CD4-positive, alpha-beta memory T cell (primary cell): ENCODE measurements at regions of chr17 and their contacts with region 1.

Region 1: DNA sequence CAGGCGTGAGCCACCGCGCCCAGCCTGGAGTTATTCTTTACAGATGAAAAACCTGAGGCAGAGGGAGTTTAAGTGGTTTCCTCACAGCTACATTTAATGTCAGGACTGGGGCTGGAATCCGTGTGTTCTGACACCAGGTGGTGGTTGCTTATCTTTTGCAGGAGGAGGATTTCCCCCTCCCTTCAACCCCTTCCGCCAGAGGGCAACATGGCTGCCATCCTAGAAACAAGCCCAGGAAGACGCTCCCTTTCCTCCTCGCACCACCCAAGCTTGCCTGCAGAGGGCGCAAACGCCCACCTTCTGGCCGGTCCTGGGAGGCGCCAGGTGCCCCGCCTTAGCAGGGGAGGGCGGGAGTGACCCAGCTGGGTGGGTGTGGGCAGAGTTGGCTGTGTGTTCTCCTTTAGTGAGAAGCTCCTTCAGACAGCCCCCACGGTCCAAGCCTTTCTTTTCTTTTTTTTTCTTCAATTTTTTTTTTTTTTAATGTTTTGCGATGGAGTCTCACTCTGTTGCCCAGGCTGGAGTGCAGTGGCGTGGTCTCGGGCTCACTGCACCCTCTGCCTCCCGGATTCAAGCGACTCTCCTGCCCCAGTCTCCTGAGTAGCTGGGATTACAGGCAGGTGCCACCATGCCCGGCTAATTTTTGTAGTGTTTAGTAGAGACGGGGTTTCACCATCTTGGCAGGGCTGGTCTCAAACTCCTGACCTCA is 9.9 kb upstream of the RAP1GAP2 start:
- DNase-seq: peak; percentile 87 to 94 (median 90)
- H3K4me3 ChIP-seq: no peak overlapping the region
- H3K4me3 Mint-ChIP-seq: peak overlapping the region in 6 of 8 donors; percentile 3 to 39 (median 30)
- H3K27ac ChIP-seq: no peak overlapping the region
- H3K27ac Mint-ChIP-seq: peak overlapping the region in 1 of 7 donors; percentile 35
- H3K4me1 ChIP-seq: peaks cover 23% of the 10 kb centered on the region
- H3K4me1 Mint-ChIP-seq: peaks cover 8 to 31% (median 14%) of the 10 kb centered on the region in 4 donors
- H3K27me3 ChIP-seq: no peaks in the 10 kb centered on the region
- H3K27me3 Mint-ChIP-seq: peaks cover 0 to 1% of the 10 kb centered on the region in 2 donors

Region 2: DNA sequence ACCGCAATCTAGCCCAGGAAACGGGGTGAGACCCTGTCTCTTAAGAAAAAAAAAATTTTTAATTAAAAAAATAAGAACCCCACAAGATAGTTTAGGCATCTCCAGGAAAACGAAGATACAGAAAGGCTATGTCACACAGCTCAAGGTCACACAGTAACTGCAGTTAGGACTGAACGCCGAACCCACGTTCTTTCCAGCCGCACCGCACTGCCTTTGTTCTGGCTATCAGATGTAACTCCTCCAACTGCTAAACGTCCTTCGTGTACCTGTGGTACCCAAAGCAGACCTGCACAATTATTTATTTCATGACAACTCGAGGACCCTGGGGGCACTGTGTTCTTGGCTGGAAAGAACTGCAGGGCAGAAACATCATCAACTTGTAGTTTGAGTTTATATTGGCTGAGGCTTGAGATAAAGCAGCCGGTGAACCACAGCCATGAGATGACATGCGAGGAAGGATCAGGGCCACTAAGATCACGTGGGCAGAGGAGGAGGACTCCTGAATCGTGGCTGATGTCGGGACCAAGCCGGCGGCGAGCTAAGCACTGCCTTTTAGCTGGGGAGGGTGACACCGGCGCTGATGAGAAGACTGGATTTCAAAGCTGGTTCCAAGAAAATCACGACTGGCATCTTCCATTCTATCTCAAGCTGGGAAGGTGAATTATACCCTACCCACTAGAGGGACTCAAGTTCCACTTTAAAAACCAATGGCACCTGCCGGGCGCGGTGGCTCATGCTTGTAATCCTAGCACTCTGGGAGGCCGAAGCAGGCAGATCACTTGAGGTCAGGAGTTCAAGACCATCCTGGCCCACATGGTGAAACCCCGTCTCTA is 364.8 kb before region 1 on chr17:
- CTCF ChIA-PET with region 1: no interaction called
- POLR2A ChIA-PET with region 1: no interaction called
- intact Hi-C with region 1: no loop called
- DNase-seq: no peak
- H3K4me3 ChIP-seq: no peak overlapping the region
- H3K4me3 Mint-ChIP-seq: no peak overlapping the region
- H3K27ac ChIP-seq: no peak overlapping the region
- H3K27ac Mint-ChIP-seq: peak overlapping the region in 1 of 7 donors; percentile 9
- H3K4me1 ChIP-seq: no peaks in the 10 kb centered on the region
- H3K4me1 Mint-ChIP-seq: peaks cover 0 to 3% (median 0%) of the 10 kb centered on the region in 4 donors
- H3K27me3 ChIP-seq: no peaks in the 10 kb centered on the region
- H3K27me3 Mint-ChIP-seq: no peaks in the 10 kb centered on the region

Region 3: DNA sequence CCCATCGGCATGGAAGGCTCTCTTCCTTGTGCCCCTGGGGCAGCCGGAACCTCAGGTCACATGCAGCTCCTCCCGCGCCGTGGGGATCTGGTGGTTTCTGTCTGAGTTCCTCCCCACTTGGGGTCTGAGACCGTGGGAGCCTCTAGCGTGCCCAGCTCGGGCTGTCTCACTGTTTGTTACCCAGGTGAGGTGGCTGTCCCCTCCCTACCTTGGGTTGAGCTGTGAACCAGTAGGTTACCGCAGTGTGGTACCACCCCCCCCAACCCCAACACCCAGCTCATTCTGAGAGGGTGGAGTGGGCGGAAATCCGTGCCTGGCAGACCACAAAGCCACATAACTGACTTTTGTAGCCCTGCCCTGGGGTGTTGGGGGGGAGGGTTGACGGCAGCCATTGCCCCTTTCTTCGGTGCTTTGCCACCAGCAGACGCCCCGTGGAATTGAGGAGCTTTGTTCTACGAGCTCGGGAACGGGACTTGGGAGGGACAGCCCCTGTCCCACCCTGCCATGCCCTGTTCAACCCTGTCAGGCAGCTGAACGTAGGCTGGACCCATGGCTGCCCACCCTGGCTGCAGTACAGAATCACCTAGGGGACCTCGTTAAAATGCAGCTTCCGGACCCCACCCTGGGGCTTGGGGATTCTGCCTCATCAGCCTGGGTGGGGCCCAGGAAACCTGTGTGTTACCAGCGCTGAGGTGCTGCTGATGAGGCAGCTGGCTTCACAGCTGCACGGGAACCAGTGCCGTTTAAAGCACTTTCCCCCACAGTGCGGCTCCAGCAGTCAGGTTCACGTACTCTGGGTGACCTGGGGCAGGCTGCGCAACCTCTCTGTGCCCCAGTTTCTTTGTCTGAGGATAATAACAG is 28.4 kb after region 1 on chr17:
- CTCF ChIA-PET with region 1: interaction called, 46 read pairs
- POLR2A ChIA-PET with region 1: interaction called, 330 read pairs
- intact Hi-C with region 1: loop called (anchors 1 kb)
- DNase-seq: peak; percentile 98 to 100 (median 98)
- H3K4me3 ChIP-seq: peak overlapping the region; percentile 62 to 74
- H3K4me3 Mint-ChIP-seq: peak overlapping the region; percentile 79 to 87 (median 83)
- H3K27ac ChIP-seq: peak overlapping the region; percentile 57
- H3K27ac Mint-ChIP-seq: peak overlapping the region; percentile 93 to 97 (median 96)
- H3K4me1 ChIP-seq: peaks cover 53% of the 10 kb centered on the region
- H3K4me1 Mint-ChIP-seq: peaks cover 22 to 48% (median 31%) of the 10 kb centered on the region in 4 donors
- H3K27me3 ChIP-seq: no peaks in the 10 kb centered on the region
- H3K27me3 Mint-ChIP-seq: no peaks in the 10 kb centered on the region

Region 4: DNA sequence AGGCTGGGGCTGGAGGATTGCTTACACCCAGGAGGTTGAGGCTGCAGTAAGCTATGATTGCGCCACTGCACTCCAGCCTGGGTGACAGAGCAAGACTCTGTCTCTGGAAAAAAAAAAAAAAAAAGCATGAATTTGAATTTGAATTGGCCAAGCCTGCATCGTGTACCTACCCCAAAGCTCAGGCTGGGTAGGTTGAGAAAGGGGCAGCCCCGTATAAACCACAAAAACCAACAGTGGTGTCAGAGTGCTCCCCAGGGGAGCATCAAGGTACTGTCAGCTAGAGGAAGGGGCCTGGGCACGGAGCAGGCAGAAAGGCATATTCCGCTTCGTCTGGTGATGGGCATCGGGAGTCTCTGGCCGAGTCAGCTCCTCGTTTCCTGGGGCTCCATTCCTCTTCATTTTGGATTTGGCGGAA is 50.8 kb after region 1 on chr17:
- CTCF ChIA-PET with region 1: interaction called, 146 read pairs
- POLR2A ChIA-PET with region 1: interaction called, 15 read pairs
- intact Hi-C with region 1: loop called (anchors 1 kb)
- DNase-seq: peak; percentile 48 to 65 (median 61)
- H3K4me3 ChIP-seq: no peak overlapping the region
- H3K4me3 Mint-ChIP-seq: no peak overlapping the region
- H3K27ac ChIP-seq: no peak overlapping the region
- H3K27ac Mint-ChIP-seq: peak overlapping the region in 2 of 7 donors; percentile 19 to 41
- H3K4me1 ChIP-seq: peaks cover 6% of the 10 kb centered on the region
- H3K4me1 Mint-ChIP-seq: peaks cover 7 to 24% (median 12%) of the 10 kb centered on the region in 4 donors
- H3K27me3 ChIP-seq: no peaks in the 10 kb centered on the region
- H3K27me3 Mint-ChIP-seq: no peaks in the 10 kb centered on the region

Region 5: DNA sequence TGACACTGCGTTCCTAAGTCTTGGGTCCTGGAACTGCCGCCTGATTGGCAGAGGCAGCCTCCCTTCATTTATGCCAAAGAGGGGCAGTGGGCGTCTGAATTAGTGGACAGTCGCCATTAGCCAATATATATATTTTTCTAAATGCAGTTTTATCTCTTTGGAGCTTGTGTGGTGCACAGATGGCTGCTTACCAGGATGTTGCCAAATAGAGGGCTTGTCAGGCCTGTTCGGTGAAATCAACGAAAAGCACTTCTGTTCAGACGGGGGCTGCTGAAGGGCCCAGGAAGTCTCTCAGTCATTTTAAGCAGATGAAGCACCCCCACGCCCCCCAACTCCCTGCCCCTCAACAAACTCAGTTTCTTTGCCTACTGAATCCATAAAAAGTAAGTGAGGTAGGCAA is 75.9 kb after region 1 on chr17:
- CTCF ChIA-PET with region 1: no interaction called
- POLR2A ChIA-PET with region 1: no interaction called
- intact Hi-C with region 1: no loop called
- DNase-seq: no peak
- H3K4me3 ChIP-seq: no peak overlapping the region
- H3K4me3 Mint-ChIP-seq: no peak overlapping the region
- H3K27ac ChIP-seq: no peak overlapping the region
- H3K27ac Mint-ChIP-seq: no peak overlapping the region
- H3K4me1 ChIP-seq: no peaks in the 10 kb centered on the region
- H3K4me1 Mint-ChIP-seq: peaks cover 9 to 21% (median 14%) of the 10 kb centered on the region in 4 donors
- H3K27me3 ChIP-seq: no peaks in the 10 kb centered on the region
- H3K27me3 Mint-ChIP-seq: no peaks in the 10 kb centered on the region

Region 6: GRCh38 chr17:2929881-2930533 is 143.7 kb after region 1 on chr17:
- CTCF ChIA-PET with region 1: interaction called, 19 read pairs
- POLR2A ChIA-PET with region 1: no interaction called
- intact Hi-C with region 1: no loop called
- DNase-seq: peak in 1 of 5 donors; percentile 6
- H3K4me3 ChIP-seq: no peak overlapping the region
- H3K4me3 Mint-ChIP-seq: no peak overlapping the region
- H3K27ac ChIP-seq: no peak overlapping the region
- H3K27ac Mint-ChIP-seq: no peak overlapping the region
- H3K4me1 ChIP-seq: peaks cover 5% of the 10 kb centered on the region
- H3K4me1 Mint-ChIP-seq: peaks cover 13 to 41% (median 17%) of the 10 kb centered on the region in 4 donors
- H3K27me3 ChIP-seq: no peaks in the 10 kb centered on the region
- H3K27me3 Mint-ChIP-seq: no peaks in the 10 kb centered on the region